ENCODE measurements at regions of chr19 and their contacts with region 1.

Region 1: DNA sequence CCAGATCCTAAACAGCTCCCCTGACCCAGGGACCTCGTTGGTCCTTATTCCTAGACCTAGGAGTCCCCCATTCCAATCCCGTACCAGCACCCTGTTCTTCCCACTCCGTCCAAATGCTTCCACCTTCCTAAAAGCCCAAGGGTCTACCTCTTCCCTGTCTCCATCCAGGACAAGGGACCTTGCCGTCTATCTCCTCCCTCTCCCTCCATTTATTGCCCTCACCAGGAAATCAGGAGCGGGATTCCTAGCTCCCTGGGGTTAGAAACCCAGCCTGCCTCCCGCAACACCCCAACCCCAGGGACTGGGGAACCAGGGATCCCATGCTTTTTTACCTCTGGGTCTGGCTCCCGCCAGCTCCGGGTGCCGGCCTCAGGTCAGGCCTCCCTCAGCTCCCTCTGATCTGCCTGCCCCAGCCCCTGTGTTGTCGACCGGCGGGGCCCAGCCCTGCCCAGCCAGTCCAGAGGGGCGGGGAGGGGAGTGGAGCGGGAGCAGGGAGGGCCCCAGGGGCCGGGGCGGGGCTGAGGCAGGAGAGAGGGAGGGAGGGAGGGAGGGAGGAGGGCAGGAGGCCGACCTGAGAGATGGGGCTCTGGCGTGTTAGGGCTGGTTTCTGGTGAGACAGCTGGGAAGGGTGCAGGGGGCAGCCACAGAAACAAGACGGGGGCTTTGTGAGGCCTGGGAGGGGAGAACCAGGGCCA is at the start of gene B3GNT8:
- DNase-seq: peak; percentile 63
- H3K4me3 Mint-ChIP-seq: peak within 1 kb of the TSS; percentile 65
- H3K27ac Mint-ChIP-seq: peak within 1 kb of the TSS; percentile 74
- H3K4me1 Mint-ChIP-seq: peaks cover 23% of the 10 kb centered on the region
- H3K27me3 Mint-ChIP-seq: no peaks in the 10 kb centered on the region
- total RNA-seq, gene B3GNT8: 0.29 TPM in 1 of 2 experiments, not detected in the other

Region 2: DNA sequence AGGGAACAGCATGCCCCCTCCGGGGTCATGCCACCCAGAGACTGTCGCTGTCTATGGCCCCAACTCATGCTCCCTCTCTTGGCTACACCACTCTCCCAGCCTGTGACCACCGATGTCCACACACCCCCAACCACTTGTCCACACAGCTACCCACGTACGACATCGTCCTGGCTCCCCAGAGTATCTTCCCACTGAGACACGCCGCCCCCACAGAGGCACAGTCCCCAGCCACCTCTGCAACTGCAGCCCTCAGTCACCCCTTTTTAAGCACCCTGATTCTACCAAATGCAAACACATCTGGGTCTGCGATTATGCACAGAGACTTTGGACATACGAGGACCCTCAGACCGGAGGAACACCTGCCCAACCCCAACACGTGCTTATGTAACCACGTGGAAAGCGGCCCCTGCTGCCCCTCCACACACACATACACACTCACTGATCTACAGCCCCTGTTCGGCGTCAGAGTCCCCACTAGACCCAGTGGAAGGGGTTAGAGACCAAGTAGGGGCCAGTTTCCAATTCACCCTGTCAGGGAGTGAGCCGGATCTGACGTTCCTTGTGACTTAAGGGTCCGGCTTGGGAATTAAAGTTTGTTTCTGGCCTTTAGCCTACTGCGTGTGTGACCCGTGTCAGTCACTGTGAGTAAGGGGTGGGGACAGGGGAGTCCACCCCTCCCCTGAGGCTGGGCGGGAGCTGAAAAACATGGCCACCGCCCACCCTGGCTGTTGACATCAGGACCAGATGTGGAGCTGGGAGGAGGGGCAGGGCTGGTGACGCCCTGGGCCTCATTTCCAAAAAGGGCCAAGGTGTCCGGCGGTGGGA is 220.0 kb before region 1 on chr19:
- CTCF ChIA-PET with region 1: interaction called, 3 read pairs
- intact Hi-C with region 1: loop called (anchors 5 kb)
- DNase-seq: no peak
- H3K4me3 Mint-ChIP-seq: no peak overlapping the region
- H3K27ac Mint-ChIP-seq: no peak overlapping the region
- H3K4me1 Mint-ChIP-seq: peaks cover 4% of the 10 kb centered on the region
- H3K27me3 Mint-ChIP-seq: no peaks in the 10 kb centered on the region

Region 3: GRCh38 chr19:41278478-41278877 is 148.6 kb before region 1 on chr19:
- CTCF ChIA-PET with region 1: no interaction called
- intact Hi-C with region 1: no loop called
- DNase-seq: no peak
- H3K4me3 Mint-ChIP-seq: no peak overlapping the region
- H3K27ac Mint-ChIP-seq: no peak overlapping the region
- H3K4me1 Mint-ChIP-seq: no peaks in the 10 kb centered on the region
- H3K27me3 Mint-ChIP-seq: no peaks in the 10 kb centered on the region

Region 4: GRCh38 chr19:41439441-41440222 is 12.5 kb after region 1 on chr19 and contains the start of gene DMAC2:
- CTCF ChIA-PET with region 1: interaction called, 12 read pairs
- intact Hi-C with region 1: no loop called
- DNase-seq: peak; percentile 99
- H3K4me3 Mint-ChIP-seq: no peak within 1 kb of the TSS
- H3K27ac Mint-ChIP-seq: no peak within 1 kb of the TSS
- H3K4me1 Mint-ChIP-seq: peaks cover 13% of the 10 kb centered on the region
- H3K27me3 Mint-ChIP-seq: no peaks in the 10 kb centered on the region
- total RNA-seq, gene DMAC2: 51.5 to 53.8 TPM

Region 5: GRCh38 chr19:41626877-41627276 is 199.8 kb after region 1 on chr19 and contains the start of gene CEACAM4:
- CTCF ChIA-PET with region 1: no interaction called
- intact Hi-C with region 1: no loop called
- DNase-seq: no peak
- H3K4me3 Mint-ChIP-seq: no peak within 1 kb of the TSS
- H3K27ac Mint-ChIP-seq: no peak within 1 kb of the TSS
- H3K4me1 Mint-ChIP-seq: no peaks in the 10 kb centered on the region
- H3K27me3 Mint-ChIP-seq: peaks cover 11% of the 10 kb centered on the region
- total RNA-seq, gene CEACAM4: not detected